Thyroid gland (tissue), 4 donors: ENCODE measurements at regions of chr18 and their contacts with region 1.

Region 1: DNA sequence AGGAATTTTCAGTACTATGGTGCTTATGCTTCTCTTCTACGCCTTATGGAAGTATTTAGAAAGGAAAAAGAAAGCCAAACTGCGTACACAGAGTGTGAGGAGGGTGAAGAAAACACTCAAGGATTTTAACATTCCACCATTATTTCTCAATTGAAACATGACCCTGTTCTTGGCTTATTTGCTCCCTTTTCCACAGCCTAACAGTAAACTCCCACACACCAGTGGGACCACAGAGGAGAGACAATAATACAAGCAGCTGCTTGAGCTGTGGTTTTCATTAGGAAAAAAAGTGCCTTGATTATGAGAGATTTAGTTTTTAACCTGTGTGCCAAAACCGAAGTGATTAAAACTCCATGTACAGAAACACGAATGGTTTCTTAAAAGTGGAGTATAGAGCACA is 134.3 kb downstream of the MEP1B start:
- DNase-seq: no peak
- H3K4me3 ChIP-seq: no peak overlapping the region
- H3K27ac ChIP-seq: no peak overlapping the region
- H3K4me1 ChIP-seq: peaks cover 9 to 11% of the 10 kb centered on the region in 2 donors
- H3K27me3 ChIP-seq: no peaks in the 10 kb centered on the region
- CTCF ChIP-seq: no peak
- POLR2A ChIP-seq: no peak

Region 2: DNA sequence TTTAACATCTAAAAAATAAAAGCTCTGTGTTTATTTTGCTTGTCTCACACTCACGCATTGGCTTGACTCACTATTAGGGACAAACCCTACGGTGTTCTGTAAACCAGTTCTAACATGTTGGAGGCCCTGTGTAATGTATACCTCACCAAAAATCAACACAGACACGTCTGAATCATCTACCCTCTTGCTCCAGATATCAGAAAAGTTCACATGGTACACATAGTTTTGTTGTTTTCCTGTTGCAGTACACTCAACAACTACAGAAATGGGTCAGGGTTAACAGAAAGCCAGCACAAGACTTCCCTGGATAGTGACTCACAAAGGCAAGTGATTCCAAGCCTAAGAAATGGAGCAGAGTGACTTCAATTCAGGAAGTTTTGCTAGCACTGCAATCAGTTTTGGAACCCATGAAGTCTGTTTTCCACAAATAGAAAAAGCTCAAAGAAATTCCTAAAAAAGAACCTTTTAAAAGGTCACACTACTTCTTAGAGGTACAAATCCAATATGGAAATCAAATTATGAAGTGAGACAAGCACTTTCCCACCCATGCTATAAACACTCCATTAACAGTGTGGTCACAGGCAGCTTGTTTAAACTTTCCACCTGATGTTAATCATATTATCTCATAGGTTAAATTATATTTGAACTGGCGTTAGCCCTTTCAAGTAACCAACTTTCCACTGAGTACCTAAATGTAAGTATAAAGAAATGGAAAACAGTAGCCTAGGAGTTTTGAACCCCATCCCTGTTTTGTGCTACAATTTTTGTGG is 59.1 kb after region 1 on chr18:
- intact Hi-C with region 1: loop called (anchors 10 kb)
- DNase-seq: no peak
- H3K4me3 ChIP-seq: no peak overlapping the region
- H3K27ac ChIP-seq: no peak overlapping the region
- H3K4me1 ChIP-seq: peaks cover 13 to 15% of the 10 kb centered on the region in 2 donors
- H3K27me3 ChIP-seq: no peaks in the 10 kb centered on the region
- CTCF ChIP-seq: no peak
- POLR2A ChIP-seq: no peak